Activated CD4-positive, alpha-beta T cell treated with anti-CD3 and anti-CD28 coated beads for 36 hours (primary cell): ENCODE measurements at regions of chr1 and their contacts with region 1.

Region 1: DNA sequence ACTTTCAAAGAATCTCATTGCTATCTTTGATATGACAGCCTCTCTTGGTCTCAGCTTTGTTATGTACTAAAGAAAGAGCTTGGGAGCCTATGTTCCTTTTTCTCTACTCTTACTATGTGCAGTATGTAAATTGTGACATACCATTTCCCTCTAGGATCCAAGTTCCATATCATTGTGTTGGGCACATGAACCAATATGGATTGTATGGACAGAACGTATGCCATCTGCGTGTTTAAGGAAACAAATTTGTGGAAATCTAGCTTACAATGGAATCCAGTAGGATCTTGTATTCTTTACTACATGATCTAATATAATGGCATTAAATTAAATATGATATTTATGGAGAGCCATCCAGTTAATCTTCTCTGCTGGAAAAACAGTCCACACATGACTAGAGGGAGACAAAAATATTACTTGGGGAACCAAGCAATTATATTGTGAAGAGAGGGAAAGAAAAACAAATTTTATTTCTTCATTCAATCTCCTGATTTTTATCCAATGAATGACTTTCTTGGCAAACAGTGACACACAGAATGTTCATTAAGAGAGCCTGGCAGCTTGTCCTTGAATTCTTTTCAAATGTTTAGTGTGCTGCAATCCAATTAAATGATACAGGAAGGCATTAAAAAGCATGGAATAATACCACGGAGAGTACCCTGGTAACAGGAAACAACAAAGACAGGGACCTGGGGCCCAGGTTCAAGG is 106.5 kb upstream of the DAB1 start:
- DNase-seq: no peak
- ATAC-seq: no peak
- H3K4me3 Mint-ChIP-seq: no peak overlapping the region
- H3K27ac Mint-ChIP-seq: no peak overlapping the region
- H3K4me1 Mint-ChIP-seq: no peaks in the 10 kb centered on the region
- H3K27me3 Mint-ChIP-seq: peaks cover 2% of the 10 kb centered on the region

Region 2: GRCh38 chr1:56570924-56571372 is 959.4 kb before region 1 on chr1:
- CTCF ChIA-PET with region 1: no interaction called
- POLR2A ChIA-PET with region 1: no interaction called
- intact Hi-C with region 1: no loop called
- DNase-seq: no peak
- ATAC-seq: no peak
- H3K4me3 Mint-ChIP-seq: no peak overlapping the region
- H3K27ac Mint-ChIP-seq: no peak overlapping the region
- H3K4me1 Mint-ChIP-seq: no peaks in the 10 kb centered on the region
- H3K27me3 Mint-ChIP-seq: peaks cover 11% of the 10 kb centered on the region

Region 3: GRCh38 chr1:57451516-57451915 is 78.8 kb before region 1 on chr1:
- CTCF ChIA-PET with region 1: no interaction called
- POLR2A ChIA-PET with region 1: no interaction called
- intact Hi-C with region 1: no loop called
- DNase-seq: no peak
- ATAC-seq: no peak
- H3K4me3 Mint-ChIP-seq: no peak overlapping the region
- H3K27ac Mint-ChIP-seq: no peak overlapping the region
- H3K4me1 Mint-ChIP-seq: no peaks in the 10 kb centered on the region
- H3K27me3 Mint-ChIP-seq: peaks cover 7% of the 10 kb centered on the region

Region 4: DNA sequence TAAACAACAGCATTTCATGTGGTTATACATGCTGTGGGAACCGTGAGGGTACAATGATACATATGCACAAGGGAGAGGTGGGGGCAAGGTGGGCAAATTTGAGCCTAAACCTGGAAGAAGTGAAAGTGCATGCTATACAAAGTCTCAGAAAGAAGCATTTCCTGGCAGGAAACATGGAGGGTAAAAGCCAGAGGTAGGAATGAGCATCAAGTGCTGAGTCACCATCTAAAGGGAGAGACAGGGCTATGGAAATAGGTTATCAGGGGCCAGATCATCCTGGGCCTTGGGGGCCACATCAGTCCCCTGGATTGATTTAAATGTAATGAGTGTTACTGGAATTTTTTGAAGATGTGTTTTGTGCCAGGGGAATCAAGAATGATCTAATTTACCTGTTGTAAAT is 46.4 kb before region 1 on chr1:
- CTCF ChIA-PET with region 1: no interaction called
- POLR2A ChIA-PET with region 1: interaction called, 14 read pairs
- intact Hi-C with region 1: no loop called
- DNase-seq: no peak
- ATAC-seq: no peak
- H3K4me3 Mint-ChIP-seq: no peak overlapping the region
- H3K27ac Mint-ChIP-seq: no peak overlapping the region
- H3K4me1 Mint-ChIP-seq: no peaks in the 10 kb centered on the region
- H3K27me3 Mint-ChIP-seq: no peaks in the 10 kb centered on the region